ENCODE measurements at regions of chr12 and their contacts with region 1.

Region 1: GRCh38 chr12:53543539-53543938 is 36.3 kb upstream of the NPFF start:
- DNase-seq: no peak
- ATAC-seq: peak; percentile 90

Region 2: GRCh38 chr12:53675651-53676453 is 132.3 kb after region 1 on chr12 and contains the start of gene ATP5MC2:
- intact Hi-C with region 1: loop called (anchors 5 kb)
- DNase-seq: peak; percentile 98
- ATAC-seq: peak; percentile 96
- total RNA-seq, gene ATP5MC2: 569 TPM

Region 3: DNA sequence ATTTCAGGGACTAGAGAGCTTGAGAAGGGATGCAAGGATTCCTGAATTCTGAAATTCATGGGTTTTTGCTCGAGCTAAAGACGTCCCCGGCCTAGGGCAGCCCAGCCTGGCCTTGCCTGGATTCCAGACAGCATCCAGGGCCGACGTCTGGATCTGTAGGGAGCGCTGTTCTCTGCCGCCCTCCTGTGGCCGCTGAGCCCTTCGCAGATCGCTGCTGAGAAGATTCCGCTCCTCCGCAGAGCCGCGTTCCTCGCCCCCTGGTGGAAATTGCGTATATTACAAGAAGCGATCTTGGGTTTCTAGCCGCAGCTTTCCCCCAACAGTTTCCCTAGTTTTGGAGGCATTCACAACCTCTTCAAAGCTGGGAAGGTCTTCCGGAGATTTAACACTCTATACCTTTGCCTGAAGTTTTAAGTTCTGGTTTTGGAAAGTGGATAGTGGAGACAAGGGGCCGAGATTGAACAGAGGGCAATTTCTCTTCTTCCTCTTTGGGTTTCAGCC is 203.1 kb after region 1 on chr12:
- intact Hi-C with region 1: loop called (anchors 10 kb)
- DNase-seq: peak; percentile 95
- ATAC-seq: peak; percentile 91